Prostate gland (tissue), 2 donors: ENCODE measurements at regions of chr12 and their contacts with region 1.

Region 1: GRCh38 chr12:41277116-41277945 is 89.2 kb downstream of the PDZRN4 start:
- DNase-seq: peak; percentile 10
- H3K4me3 ChIP-seq: no peak overlapping the region
- H3K27ac ChIP-seq: no peak overlapping the region
- H3K4me1 ChIP-seq: no peaks in the 10 kb centered on the region
- H3K27me3 ChIP-seq: no peaks in the 10 kb centered on the region
- CTCF ChIP-seq: peak in 3 of 4 experiments; percentile 56 to 62 (median 62)
- POLR2A ChIP-seq: no peak

Region 2: DNA sequence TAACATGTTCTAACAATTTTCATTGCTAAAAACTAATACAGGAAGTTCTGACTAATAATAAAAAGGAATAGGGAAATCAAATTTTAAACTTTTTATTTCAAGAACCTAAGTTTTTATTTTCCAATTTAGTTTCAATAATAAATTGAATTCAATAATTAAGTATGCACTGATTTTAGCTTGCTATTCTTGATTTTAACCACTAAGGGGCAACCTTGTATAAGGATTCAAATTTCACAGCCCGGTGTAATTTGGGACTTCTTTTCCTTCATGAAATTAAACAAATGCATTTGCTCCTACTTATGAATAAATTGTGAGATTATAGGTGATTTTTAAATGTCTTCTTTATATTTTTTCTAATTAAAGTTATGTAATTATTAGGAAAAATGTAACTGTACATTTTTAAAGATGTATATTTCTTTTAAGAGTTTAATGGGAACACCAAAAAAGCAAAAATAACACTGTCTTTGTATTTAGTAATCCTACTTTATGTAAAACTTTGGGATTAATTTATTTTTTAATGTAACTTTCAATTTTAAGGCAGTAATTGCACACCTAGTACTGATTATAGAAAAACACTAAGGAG is 330.6 kb before region 1 on chr12:
- intact Hi-C with region 1: loop called (anchors 10 kb)
- DNase-seq: no peak
- H3K4me3 ChIP-seq: no peak overlapping the region
- H3K27ac ChIP-seq: no peak overlapping the region
- H3K4me1 ChIP-seq: no peaks in the 10 kb centered on the region
- H3K27me3 ChIP-seq: no peaks in the 10 kb centered on the region
- CTCF ChIP-seq: peak in 3 of 4 experiments; percentile 60 to 74 (median 63)
- POLR2A ChIP-seq: no peak

Region 3: DNA sequence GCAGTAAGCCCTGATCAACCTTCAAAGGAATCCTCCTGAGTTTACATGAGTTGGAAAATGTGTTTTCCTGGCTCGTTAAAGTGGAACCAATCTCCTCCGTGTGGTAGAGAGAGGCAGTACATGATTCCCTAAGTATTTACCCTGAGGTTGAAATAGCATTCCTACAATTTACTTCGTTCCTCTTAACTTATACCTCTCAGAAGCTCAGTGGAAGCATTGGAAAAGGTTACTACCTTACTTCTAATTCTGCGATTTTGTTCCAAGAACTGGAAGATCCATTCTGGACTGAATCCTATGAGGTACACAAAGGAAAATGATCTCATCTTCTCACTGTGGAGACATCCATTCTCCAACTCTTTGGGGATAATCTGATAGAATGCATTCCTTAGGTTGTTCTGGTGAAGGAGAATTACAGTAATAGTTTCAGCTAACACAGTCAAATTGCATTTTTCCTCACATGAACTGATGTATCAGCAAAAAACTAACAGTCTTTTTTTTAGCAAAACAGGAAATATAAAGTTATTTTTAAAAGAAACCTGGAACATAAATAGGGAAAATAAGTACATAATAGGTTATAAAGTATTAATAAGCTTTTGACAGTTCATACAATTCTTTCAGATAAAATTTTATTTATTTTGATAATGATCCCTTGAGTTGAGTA is 386.4 kb after region 1 on chr12:
- intact Hi-C with region 1: loop called (anchors 10 kb)
- DNase-seq: no peak
- H3K4me3 ChIP-seq: no peak overlapping the region
- H3K27ac ChIP-seq: no peak overlapping the region
- H3K4me1 ChIP-seq: no peaks in the 10 kb centered on the region
- H3K27me3 ChIP-seq: no peaks in the 10 kb centered on the region
- CTCF ChIP-seq: peak in 3 of 4 experiments; percentile 13 to 58 (median 27)
- POLR2A ChIP-seq: no peak